WTC11 (cell line): ENCODE measurements at regions of chr18 and their contacts with region 1.

Region 1: GRCh38 chr18:54109131-54109683 is 115.3 kb downstream of the MBD2 start:
- DNase-seq: no peak
- ATAC-seq: no peak
- H3K4me3 Mint-ChIP-seq: no peak overlapping the region
- H3K27ac Mint-ChIP-seq: no peak overlapping the region
- H3K4me1 Mint-ChIP-seq: no peaks in the 10 kb centered on the region
- H3K27me3 Mint-ChIP-seq: no peaks in the 10 kb centered on the region; the same call in 1 of the 2 replicates
- CTCF ChIP-seq: no peak

Region 2: DNA sequence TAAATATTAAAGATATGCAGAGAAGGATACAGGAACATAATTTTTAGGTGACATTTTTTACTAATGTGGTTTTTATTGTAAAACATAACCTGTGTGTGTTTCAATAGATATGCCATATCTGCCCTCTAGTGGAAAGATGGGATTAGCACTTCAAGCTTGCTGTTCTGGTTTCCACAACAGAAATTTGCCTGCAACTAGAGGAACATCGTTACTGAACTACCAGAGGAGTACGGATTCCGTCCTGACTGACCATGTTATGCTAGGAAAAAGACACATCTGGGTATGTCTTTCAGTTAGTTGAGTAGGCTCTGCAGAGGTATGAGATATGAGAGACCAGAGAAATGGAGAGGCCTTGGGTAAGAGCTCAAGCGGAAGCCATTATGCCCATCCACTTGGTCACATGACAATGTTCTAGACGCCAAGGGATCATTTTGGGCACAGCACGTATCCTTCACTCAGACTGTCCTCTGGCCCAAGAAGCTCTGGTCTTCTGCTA is 10.4 kb after region 1 on chr18:
- CTCF ChIA-PET with region 1: interaction called, 10 read pairs
- POLR2A ChIA-PET with region 1: no interaction called
- DNase-seq: no peak
- ATAC-seq: peak; percentile 58
- H3K4me3 Mint-ChIP-seq: peak overlapping the region; percentile 54
- H3K27ac Mint-ChIP-seq: no peak overlapping the region; the same call in 1 of the 2 replicates
- H3K4me1 Mint-ChIP-seq: peaks cover 38% of the 10 kb centered on the region
- H3K27me3 Mint-ChIP-seq: no peaks in the 10 kb centered on the region
- CTCF ChIP-seq: peak; percentile 70